ENCODE measurements at regions of chr20 and their contacts with region 1.

Region 1: DNA sequence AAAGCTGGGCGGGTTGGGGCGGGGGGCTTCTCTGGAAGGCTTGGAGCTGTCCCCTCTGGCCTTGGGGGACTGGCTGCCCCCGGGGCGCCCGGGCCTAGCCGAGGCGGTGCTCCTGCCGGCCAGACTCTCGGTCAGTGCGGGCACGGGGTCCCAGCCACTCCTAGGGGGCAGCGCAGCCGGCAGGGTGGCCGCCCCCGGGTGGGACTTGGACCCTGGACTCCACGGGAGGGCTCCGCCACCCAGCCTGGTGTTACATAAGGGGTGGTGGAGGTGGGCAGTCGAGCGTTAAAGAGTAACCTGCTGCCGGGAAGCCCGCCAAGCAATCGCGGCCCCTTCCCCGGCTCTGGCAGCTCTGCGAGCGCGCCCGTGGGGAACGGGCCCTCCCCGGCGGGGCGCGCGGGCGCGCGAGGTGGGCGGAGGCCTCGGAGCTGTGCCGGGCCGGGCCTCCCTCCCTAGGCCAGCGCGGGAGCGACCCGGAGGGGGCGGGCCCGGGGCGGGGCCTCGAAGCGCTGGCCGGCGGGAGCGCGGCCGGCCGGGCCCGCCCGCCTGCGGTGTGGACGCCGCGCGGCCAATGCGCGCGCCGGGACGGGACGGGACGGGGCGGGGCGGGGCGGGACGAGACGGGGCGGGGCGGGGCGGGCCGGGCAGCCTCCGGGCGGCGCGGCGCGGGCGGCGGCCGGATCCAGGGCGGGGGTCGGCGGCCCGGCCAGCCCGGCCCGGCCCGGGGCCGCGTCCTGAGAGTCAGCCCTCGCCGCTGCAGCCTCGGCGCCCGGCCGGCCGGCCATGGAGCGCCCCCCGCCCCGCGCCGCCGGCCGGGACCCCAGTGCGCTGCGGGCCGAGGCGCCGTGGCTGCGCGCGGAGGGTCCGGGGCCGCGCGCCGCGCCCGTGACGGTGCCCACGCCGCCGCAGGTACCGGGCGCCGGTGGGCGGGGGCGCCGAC is at the start of gene SLC2A4RG:
- DNase-seq: peak in 8 of 10 donors; percentile 47 to 89 (median 74)
- H3K4me3 ChIP-seq: peak within 1 kb of the TSS; percentile 42 to 76 (median 64)
- H3K27ac ChIP-seq: peak within 1 kb of the TSS; percentile 39 to 96 (median 91)
- H3K27me3 ChIP-seq: no peaks in the 10 kb centered on the region
- CTCF ChIP-seq: no peak
- total RNA-seq, gene SLC2A4RG: 15.1 to 78.0 (median 33.5) TPM

Region 2: GRCh38 chr20:63627129-63627750 is 112.2 kb before region 1 on chr20:
- intact Hi-C with region 1: loop called in 1 of 2 experiments (anchors 2 kb)
- DNase-seq: peak; percentile 83 to 94 (median 87)
- H3K4me3 ChIP-seq: peak overlapping the region; percentile 52 to 100 (median 97)
- H3K27ac ChIP-seq: peak overlapping the region; percentile 40 to 99 (median 97)
- H3K27me3 ChIP-seq: no peaks in the 10 kb centered on the region
- CTCF ChIP-seq: peak in 4 of 56 donors; percentile 10 to 34 (median 11)

Region 3: DNA sequence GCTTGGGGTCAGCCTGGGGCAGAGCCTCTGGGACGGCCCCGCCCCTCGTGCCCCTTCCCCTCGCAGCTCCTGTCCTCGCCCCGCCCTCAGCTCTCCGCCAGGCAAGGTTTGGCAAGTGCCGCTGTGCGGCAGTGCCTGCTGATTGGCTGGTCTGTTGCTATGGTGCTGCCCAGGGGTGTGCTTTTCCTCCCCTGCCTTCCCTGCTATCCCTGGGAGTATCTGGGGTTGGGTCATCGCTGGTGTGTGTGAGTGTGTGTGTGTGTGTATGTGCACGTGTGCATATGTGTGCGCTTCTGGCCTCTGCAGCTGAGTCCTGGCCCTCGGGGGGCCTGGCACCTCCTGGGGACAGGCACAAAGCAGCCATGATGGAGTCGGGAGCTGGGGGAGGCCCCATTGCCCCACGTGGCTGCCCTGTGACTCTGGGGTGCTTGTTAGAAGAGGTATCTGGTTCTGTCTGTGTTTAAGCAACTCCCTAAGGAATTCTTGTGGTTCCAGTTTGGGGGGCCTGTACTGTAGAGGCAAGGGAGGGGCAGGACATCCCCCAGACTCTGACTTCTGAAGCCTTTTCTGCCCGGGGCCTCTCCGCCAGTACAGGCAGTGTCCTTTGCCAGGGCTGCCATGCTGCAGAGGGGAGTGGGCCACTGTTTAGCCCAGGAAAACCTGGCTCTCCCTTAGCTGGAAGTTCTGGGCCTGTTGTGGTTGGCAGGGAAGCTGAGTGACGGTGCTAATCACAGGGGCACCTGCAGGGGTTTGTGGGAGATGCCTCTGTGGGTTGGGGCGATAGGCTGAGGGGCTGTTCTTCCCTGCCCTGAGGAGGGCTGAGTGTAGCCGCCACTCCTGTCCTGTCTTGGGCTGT is 74.3 kb before region 1 on chr20:
- intact Hi-C with region 1: no loop called
- DNase-seq: peak in 8 of 10 donors; percentile 70 to 85 (median 80)
- H3K4me3 ChIP-seq: peak overlapping the region in 38 of 59 donors; percentile 1 to 43 (median 27)
- H3K27ac ChIP-seq: peak overlapping the region in 35 of 59 donors; percentile 5 to 82 (median 55)
- H3K27me3 ChIP-seq: no peaks in the 10 kb centered on the region
- CTCF ChIP-seq: no peak

Region 4: GRCh38 chr20:63707549-63708300 is 31.7 kb before region 1 on chr20 and contains the starts of genes ARFRP1 and ZGPAT:
- intact Hi-C with region 1: loop called in 1 of 2 experiments (anchors 2 kb)
- DNase-seq: peak; percentile 88 to 97 (median 90)
- H3K4me3 ChIP-seq: peak within 1 kb of the TSS; percentile 72 to 100 (median 94)
- H3K27ac ChIP-seq: peak within 1 kb of the TSS in 55 of 59 donors; percentile 30 to 94 (median 83)
- H3K27me3 ChIP-seq: no peaks in the 10 kb centered on the region
- CTCF ChIP-seq: peak in 31 of 56 donors; percentile 5 to 59 (median 26)
- total RNA-seq, gene ARFRP1: 37.8 to 65.5 (median 48.4) TPM
- total RNA-seq, gene ZGPAT: 18.4 to 46.9 (median 28.4) TPM